Right ventricle myocardium inferior (tissue), 1 donor: ENCODE measurements at regions of chr12 and their contacts with region 1.

Region 1: GRCh38 chr12:32399337-32400113 is at the start of gene FGD4:
- DNase-seq: peak; percentile 92
- ATAC-seq: peak; percentile 97
- total RNA-seq, gene FGD4: 17.4 TPM

Region 2: DNA sequence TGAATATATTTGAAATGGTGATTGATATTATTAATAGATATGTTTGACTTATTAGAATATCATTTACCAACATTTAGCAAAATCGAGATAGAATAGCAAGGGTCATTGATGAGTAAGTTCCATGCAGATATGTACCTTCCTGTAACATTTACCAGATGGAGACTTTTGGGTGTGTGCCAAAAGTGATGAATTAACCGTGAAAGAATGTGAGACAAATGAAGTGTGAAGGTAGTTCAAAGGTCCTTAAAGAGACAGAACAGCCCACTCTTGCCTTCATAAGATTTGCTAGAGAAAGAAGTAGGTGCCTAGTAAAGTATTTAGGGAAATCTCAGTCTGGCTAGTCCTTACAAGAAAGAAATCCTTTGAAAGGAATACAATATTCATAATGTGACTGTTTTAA is 45.4 kb after region 1 on chr12:
- intact Hi-C with region 1: loop called (anchors 5 kb)
- DNase-seq: no peak
- ATAC-seq: no peak

Region 3: DNA sequence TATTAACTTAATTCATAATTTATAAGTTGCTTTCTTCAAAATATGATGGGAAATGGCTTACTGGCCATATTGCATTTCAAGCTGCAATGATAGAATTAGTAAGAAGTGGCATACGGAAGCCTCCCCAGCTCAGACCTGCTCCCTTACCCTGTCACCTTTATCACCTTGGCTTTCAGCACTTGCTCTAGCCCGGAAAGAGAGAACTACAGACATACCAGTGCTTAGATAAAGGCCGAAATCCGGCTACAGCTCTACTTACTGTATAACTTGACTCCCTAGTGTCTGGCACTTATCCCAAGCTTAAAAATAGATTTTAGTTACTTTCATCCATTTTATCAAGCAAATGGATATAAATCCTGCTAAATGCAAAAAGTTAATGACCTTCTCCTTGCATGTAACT is 454.6 kb after region 1 on chr12:
- intact Hi-C with region 1: no loop called
- DNase-seq: no peak
- ATAC-seq: peak; percentile 91